ENCODE measurements at regions of chr18 and their contacts with region 1.

Region 1: GRCh38 chr18:6729247-6730091 is at the start of gene ARHGAP28:
- DNase-seq: peak; percentile 84
- total RNA-seq, gene ARHGAP28: 2.1 TPM

Region 2: DNA sequence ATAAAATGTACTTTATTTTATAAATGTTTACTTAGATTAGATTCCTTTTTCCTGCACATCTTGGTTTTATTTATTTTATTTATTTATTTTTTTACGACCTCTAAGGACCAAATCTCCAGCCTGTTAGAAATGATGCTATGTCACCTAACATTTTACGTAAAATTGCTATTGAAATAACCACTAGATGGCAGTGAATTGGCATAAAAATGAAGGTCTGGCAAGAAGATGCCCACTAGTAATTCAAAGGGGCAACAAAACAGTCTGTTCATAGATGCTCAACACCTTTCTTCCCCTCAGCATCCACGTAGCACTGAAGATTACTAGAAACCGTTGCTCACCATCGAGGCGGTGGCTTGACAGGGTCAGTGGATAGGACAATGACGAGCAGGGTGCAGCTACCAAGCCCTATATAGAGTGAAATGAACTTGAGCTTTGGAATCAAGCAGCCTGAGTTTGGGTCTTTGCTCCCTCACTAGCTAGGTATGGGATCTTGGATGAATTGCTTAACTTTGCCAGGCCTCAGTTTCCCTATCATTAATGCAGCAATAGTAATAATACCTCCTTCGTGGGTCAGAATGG is 186.1 kb before region 1 on chr18:
- intact Hi-C with region 1: loop called (anchors 10 kb)
- DNase-seq: no peak

Region 3: DNA sequence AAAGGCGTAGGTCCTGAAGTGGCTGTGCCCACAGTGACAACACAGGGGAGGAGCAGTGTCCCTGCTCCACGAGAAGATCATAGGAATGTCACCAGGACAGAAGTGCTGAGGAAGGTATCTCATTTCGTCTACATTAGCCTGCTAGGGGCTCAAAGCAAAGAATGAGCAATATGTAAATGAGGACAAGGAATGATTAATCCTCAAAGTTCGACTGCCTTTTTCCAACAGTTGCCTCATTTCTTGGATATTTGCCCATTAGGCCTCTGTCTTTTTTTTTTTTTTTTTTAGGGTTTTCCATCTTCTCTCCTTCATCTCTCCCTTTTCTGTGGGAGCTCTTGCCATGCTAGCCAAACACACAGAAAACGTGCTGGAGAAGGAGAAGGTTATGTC is 105.2 kb before region 1 on chr18:
- intact Hi-C with region 1: loop called (anchors 10 kb)
- DNase-seq: no peak

Region 4: DNA sequence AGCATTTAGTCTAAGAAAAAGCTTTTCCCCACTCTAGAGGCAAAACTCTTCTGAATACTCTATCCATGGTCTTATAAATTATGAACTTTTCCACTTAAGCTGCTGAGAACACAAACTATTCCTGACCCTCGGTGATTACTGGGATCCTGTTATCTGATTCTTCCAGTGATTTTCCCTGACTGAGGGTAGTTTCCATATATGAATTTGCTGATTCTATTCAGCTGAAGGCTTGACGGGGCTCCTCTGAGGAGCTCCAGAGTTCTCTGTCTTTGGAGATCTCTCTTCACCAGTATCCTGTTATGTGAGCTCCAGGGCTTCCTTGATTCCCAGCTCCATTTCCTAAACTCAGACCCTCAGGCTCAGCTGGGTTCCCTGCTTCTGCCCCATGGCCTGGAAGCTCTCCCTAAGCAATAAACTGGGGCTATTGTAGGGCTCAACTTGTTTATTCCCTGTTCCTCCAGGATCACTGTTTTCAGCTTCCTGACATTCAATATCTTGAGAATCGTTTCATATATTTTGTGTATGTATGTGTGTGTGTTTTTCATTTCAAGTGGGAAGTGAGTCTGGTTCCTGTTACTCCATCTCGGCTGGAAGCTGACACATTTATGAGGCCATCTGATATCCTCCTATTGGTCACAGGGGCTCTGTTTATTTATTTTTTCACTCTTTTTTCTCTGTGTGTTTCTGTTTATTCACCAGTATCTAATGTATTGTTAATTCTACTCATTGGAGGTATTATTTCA is 78.2 kb after region 1 on chr18:
- intact Hi-C with region 1: no loop called
- DNase-seq: no peak

Region 5: GRCh38 chr18:6885992-6886796 is 156.7 kb after region 1 on chr18:
- intact Hi-C with region 1: loop called (anchors 10 kb)
- DNase-seq: no peak

Measured in cardiac septum (tissue), 1 donor.